ENCODE measurements at regions of chr1 and their contacts with region 1.

Region 1: DNA sequence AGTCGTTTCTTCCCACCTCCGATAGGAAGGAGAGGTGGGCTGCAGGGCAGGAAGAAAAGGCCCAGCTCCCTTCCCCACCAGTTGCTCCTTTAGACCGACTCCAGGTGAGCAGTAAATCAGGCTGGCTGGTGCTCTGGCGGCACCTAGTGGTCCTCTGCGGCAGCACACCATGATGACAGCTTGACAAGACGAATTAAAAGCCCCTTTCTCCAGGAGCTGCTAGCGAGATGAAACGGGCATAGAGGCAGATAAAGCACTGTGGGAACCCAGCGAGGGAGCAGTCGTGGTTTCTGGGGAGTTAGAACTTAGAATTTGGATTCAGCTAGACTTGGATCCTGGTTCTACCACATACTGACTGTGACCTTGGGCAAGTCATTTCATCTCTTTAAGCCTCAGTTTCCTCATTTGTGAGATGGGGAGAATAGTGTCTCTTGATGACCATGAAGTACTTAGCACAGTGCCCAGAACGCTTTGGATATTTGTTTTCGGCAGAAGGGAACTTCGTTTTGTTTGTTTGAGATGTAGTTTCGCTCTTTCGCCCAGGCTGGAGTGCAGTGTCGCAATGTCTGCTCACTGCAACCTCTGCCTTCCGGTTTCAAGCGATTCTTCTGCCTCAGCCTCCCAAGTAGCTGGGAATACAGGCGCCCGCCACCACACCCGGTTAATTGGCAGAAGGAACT is 21.8 kb upstream of the COL9A2 start:
- DNase-seq: peak; percentile 97
- H3K4me3 Mint-ChIP-seq: peak overlapping the region; percentile 35
- H3K27ac Mint-ChIP-seq: peak overlapping the region; percentile 72
- H3K4me1 Mint-ChIP-seq: peaks cover 52% of the 10 kb centered on the region
- H3K27me3 Mint-ChIP-seq: no peaks in the 10 kb centered on the region

Region 2: GRCh38 chr1:40153073-40153770 is 185.7 kb before region 1 on chr1:
- CTCF ChIA-PET with region 1: interaction called, 226 read pairs
- intact Hi-C with region 1: loop called (anchors 1 kb)
- DNase-seq: peak; percentile 51
- H3K4me3 Mint-ChIP-seq: no peak overlapping the region
- H3K27ac Mint-ChIP-seq: peak overlapping the region; percentile 10
- H3K4me1 Mint-ChIP-seq: peaks cover 7% of the 10 kb centered on the region
- H3K27me3 Mint-ChIP-seq: peaks cover 2% of the 10 kb centered on the region

Region 3: GRCh38 chr1:40291293-40291692 is 47.6 kb before region 1 on chr1:
- CTCF ChIA-PET with region 1: interaction called, 10 read pairs
- intact Hi-C with region 1: no loop called
- DNase-seq: no peak
- H3K4me3 Mint-ChIP-seq: no peak overlapping the region
- H3K27ac Mint-ChIP-seq: no peak overlapping the region
- H3K4me1 Mint-ChIP-seq: no peaks in the 10 kb centered on the region
- H3K27me3 Mint-ChIP-seq: no peaks in the 10 kb centered on the region

Region 4: DNA sequence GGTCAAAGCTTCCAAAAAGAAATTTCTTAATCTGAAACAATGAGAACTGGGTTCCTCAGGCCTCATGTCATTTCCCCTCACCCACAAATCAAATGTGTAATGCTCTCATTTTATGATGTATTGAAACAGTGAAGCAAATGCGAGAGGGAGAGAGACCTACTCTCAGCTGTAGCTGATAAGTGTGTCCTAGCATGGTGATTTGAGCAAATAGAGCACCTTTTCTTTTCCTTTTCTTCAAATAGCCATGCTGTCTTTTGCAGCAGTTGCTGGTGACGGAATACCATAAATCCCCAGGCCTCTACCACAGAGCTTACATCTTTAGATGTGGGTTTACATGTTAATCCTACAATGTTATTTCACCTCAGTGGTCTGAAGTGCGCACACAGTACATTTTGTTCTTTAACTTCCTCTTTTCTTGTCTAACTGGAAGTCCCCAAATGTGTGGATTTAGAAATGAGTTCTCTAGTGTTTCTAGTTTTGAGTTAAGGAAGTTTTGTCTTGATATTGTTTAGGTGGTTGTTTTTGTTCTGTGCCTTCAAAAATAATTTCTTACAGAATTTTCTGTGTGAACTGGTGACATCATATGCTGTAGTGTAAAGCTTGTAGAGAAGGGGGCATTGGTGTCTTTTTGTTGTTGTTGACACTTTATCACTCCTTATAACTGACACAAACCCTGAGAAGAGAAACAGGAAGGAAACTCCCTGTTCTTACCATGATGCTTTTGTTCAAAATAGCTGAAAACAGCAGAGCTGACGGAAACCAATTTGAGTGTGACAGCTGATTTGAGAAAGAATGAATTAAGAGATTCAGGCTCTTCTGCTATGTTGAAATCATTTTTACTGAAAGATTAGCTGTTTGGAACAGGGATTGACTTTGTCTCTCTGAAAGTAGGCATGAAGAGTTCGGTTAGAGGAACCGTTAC is 46.8 kb after region 1 on chr1:
- CTCF ChIA-PET with region 1: interaction called, 16 read pairs
- intact Hi-C with region 1: loop called (anchors 1 kb)
- DNase-seq: peak; percentile 85
- H3K4me3 Mint-ChIP-seq: peak overlapping the region; percentile 80
- H3K27ac Mint-ChIP-seq: peak overlapping the region; percentile 99
- H3K4me1 Mint-ChIP-seq: peaks cover 88% of the 10 kb centered on the region
- H3K27me3 Mint-ChIP-seq: no peaks in the 10 kb centered on the region

Region 5: DNA sequence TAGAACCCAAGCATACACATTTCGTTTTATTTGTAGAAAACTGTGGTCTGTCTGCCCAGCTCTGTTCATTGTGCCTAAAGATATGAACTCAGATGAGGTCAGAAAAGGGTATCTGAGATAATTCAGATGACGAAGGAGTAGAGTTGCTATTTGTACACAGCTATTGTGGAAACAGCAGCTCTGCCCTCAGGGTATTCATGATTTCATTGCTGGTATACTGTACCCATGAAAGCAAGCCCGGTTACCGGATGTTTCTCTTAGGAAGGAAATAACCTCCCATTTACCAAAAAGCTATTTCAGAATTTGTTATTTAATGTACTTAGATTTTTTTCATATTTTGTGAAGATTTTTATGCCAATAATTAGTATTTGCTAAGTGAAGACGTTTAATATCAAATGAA is 72.4 kb after region 1 on chr1:
- CTCF ChIA-PET with region 1: interaction called, 37 read pairs
- intact Hi-C with region 1: no loop called
- DNase-seq: no peak
- H3K4me3 Mint-ChIP-seq: no peak overlapping the region
- H3K27ac Mint-ChIP-seq: peak overlapping the region; percentile 26
- H3K4me1 Mint-ChIP-seq: peaks cover 28% of the 10 kb centered on the region
- H3K27me3 Mint-ChIP-seq: no peaks in the 10 kb centered on the region

Region 6: GRCh38 chr1:40531381-40532061 is 192.6 kb after region 1 on chr1 and contains the start of gene ZNF684:
- CTCF ChIA-PET with region 1: interaction called, 3 read pairs
- intact Hi-C with region 1: loop called (anchors 5 kb)
- DNase-seq: peak; percentile 94
- H3K4me3 Mint-ChIP-seq: peak within 1 kb of the TSS; percentile 99
- H3K27ac Mint-ChIP-seq: peak within 1 kb of the TSS; percentile 91
- H3K4me1 Mint-ChIP-seq: peaks cover 18% of the 10 kb centered on the region
- H3K27me3 Mint-ChIP-seq: peaks cover 4% of the 10 kb centered on the region
- total RNA-seq, gene ZNF684: 6.8 to 7.0 TPM

Measured in activated naive CD4-positive, alpha-beta T cell treated with anti-CD3 and anti-CD28 coated beads for 36 hours (primary cell).